ENCODE measurements at regions of chr18 and their contacts with region 1.

Region 1: GRCh38 chr18:28485918-28486317 is 309.0 kb upstream of the CDH2 start:
- DNase-seq: no peak
- ATAC-seq: no peak

Region 2: DNA sequence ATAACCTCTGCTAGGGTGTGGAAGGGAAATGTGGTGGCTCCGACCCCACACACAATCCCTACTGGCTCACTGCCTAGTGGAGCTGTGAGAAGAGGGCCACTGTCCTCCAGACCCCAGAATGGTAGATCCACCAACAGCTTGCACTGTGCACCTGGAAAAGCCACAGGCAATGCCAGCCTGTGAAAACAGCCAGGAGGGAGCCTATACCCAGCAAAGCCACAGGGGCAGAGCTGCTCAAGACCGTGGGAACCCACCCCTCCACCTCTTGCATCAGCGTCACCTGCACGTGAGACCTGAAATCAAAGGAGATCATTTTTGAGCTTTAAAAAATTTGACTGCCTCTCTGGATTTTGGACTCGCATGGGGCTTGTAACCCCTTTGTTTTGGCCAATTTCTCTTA is 60.0 kb before region 1 on chr18:
- intact Hi-C with region 1: loop called (anchors 2 kb)
- DNase-seq: no peak
- ATAC-seq: no peak